Mammary epithelial cell (primary cell): ENCODE measurements at regions of chr10 and their contacts with region 1.

Region 1: GRCh38 chr10:90751107-90751997 is 106.5 kb downstream of the HTR7 start:
- DNase-seq: peak; percentile 46
- H3K4me3 ChIP-seq: no peak overlapping the region
- H3K27ac ChIP-seq: no peak overlapping the region
- H3K4me1 ChIP-seq: peaks cover 5% of the 10 kb centered on the region
- H3K27me3 ChIP-seq: no peaks in the 10 kb centered on the region
- CTCF ChIP-seq: peak; percentile 71 to 85

Region 2: GRCh38 chr10:90779548-90779947 is 28.2 kb after region 1 on chr10:
- CTCF ChIA-PET with region 1: no interaction called
- dilution Hi-C with region 1: no loop called
- in situ Hi-C with region 1: no loop called
- intact Hi-C with region 1: loop called (anchors 1 kb)
- DNase-seq: peak; percentile 35
- H3K4me3 ChIP-seq: no peak overlapping the region
- H3K27ac ChIP-seq: no peak overlapping the region
- H3K4me1 ChIP-seq: peaks cover 25% of the 10 kb centered on the region
- H3K27me3 ChIP-seq: no peaks in the 10 kb centered on the region
- CTCF ChIP-seq: peak; percentile 44 to 50

Region 3: GRCh38 chr10:90787393-90788198 is 36.2 kb after region 1 on chr10:
- CTCF ChIA-PET with region 1: interaction called, 6 read pairs
- dilution Hi-C with region 1: no loop called
- in situ Hi-C with region 1: no loop called
- intact Hi-C with region 1: loop called (anchors 1 kb)
- DNase-seq: peak; percentile 27
- H3K4me3 ChIP-seq: no peak overlapping the region
- H3K27ac ChIP-seq: no peak overlapping the region
- H3K4me1 ChIP-seq: no peaks in the 10 kb centered on the region
- H3K27me3 ChIP-seq: no peaks in the 10 kb centered on the region
- CTCF ChIP-seq: peak; percentile 84 to 97

Region 4: DNA sequence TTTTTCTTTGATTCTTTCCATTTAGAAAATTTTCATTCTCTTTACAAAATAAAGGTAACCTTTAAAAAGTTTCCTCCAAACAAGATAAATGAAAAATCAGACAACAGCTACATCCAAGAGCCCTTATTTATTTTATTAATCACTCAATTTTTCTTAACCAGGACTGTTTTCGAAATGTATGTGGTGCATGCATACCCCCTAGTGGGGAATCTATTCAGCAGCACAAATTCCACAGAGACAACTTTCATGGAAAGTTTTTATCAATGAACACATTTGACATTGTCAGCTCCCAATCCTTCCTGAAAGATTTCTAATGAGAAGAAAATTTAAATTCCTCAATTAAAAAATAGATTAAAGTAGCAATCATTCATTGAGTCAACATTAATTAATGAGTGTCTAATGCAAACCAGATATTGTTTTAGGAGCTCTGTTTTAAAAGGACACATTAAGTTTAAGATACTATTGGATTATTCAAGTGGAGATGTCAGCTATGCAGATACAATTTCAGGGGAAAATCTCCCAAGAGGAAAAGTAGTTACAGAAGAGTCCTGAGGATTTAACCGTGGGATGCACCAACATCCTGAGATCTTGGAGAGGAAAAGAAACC is 111.7 kb after region 1 on chr10:
- CTCF ChIA-PET with region 1: interaction called, 5 read pairs
- dilution Hi-C with region 1: no loop called
- in situ Hi-C with region 1: loop called in 1 of 2 experiments (anchors 5 kb)
- intact Hi-C with region 1: loop called (anchors 1 kb)
- DNase-seq: peak; percentile 35
- H3K4me3 ChIP-seq: no peak overlapping the region
- H3K27ac ChIP-seq: no peak overlapping the region
- H3K4me1 ChIP-seq: peaks cover 16% of the 10 kb centered on the region
- H3K27me3 ChIP-seq: no peaks in the 10 kb centered on the region
- CTCF ChIP-seq: peak; percentile 81 to 93

Region 5: GRCh38 chr10:90871766-90872647 is 120.7 kb after region 1 on chr10 and contains the start of gene RPP30:
- CTCF ChIA-PET with region 1: no interaction called
- dilution Hi-C with region 1: no loop called
- in situ Hi-C with region 1: loop called in 1 of 2 experiments (anchors 5 kb)
- intact Hi-C with region 1: loop called (anchors 2 kb)
- DNase-seq: peak; percentile 86
- H3K4me3 ChIP-seq: peak within 1 kb of the TSS; percentile 80 to 94 (median 89)
- H3K27ac ChIP-seq: peak within 1 kb of the TSS; percentile 72
- H3K4me1 ChIP-seq: peaks cover 20% of the 10 kb centered on the region
- H3K27me3 ChIP-seq: no peaks in the 10 kb centered on the region
- CTCF ChIP-seq: no peak
- total RNA-seq, gene RPP30: 32.3 to 38.8 TPM